ENCODE measurements at regions of chr12 and their contacts with region 1.

Region 1: GRCh38 chr12:4276524-4277204 is 3.1 kb downstream of the CCND2 start:
- DNase-seq: peak; percentile 76 to 96
- ATAC-seq: peak; percentile 27 to 50 (median 27)
- H3K4me3 ChIP-seq: no peak overlapping the region
- H3K4me3 Mint-ChIP-seq: peak overlapping the region; percentile 92
- H3K27ac ChIP-seq: no peak overlapping the region
- H3K27ac Mint-ChIP-seq: peak overlapping the region; percentile 92 to 98
- H3K4me1 ChIP-seq: peaks cover 65% of the 10 kb centered on the region
- H3K4me1 Mint-ChIP-seq: peaks cover 59 to 61% of the 10 kb centered on the region in 2 donors
- H3K27me3 ChIP-seq: no peaks in the 10 kb centered on the region
- H3K27me3 Mint-ChIP-seq: no peaks in the 10 kb centered on the region
- CTCF ChIP-seq: peak; percentile 80

Region 2: DNA sequence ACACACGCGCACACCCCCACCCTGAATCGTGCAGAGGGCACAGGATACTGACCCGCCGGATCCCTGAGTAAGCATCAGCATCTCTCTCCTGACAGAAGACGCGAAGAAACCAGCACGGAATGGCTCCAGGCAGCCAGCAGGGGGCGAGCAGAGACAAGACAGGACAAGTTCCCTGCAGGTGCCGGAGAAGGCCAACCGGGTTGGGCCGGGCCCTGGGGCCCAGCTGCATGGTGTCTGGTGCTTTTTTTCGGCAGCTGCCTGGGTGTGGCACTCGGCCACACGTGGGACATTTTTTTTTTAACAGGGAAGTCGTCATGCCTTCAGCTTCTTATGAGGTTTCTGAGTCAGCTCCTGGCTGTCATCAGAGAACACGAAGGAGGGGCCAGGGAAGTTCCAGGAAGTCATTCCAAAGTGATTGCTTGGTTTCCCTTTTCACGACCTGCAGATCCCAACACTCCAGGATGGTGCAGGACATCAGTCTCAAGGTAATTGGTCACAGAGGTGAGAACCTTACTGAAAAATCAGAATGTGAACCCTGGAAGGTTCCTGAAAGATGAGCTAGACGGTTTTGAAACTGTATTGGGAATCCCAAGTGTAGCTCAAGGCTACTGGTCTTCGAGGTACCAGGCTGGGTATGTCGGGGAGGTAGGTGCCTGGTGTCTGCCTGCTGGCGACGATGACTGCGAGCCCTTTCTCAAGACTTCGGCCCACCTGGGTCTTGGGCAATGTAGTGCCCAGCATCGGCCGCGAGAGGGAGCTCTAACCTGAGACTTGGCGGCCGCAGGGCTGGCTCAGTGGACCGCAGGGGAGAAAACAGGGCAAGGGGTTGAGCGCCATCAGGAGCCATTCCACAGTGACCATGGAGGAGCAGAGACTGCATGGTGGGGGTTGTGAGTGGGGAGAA is 976.5 kb before region 1 on chr12:
- intact Hi-C with region 1: loop called (anchors 2 kb)
- DNase-seq: peak; percentile 59 to 84
- ATAC-seq: peak; percentile 76 to 83 (median 83)
- H3K4me3 ChIP-seq: no peak overlapping the region
- H3K4me3 Mint-ChIP-seq: peak overlapping the region; percentile 81
- H3K27ac ChIP-seq: no peak overlapping the region
- H3K27ac Mint-ChIP-seq: no peak overlapping the region
- H3K4me1 ChIP-seq: peaks cover 11% of the 10 kb centered on the region
- H3K4me1 Mint-ChIP-seq: peaks cover 12 to 13% of the 10 kb centered on the region in 2 donors
- H3K27me3 ChIP-seq: no peaks in the 10 kb centered on the region
- H3K27me3 Mint-ChIP-seq: peaks cover 0 to 10% of the 10 kb centered on the region in 2 donors
- CTCF ChIP-seq: peak; percentile 90

Region 3: DNA sequence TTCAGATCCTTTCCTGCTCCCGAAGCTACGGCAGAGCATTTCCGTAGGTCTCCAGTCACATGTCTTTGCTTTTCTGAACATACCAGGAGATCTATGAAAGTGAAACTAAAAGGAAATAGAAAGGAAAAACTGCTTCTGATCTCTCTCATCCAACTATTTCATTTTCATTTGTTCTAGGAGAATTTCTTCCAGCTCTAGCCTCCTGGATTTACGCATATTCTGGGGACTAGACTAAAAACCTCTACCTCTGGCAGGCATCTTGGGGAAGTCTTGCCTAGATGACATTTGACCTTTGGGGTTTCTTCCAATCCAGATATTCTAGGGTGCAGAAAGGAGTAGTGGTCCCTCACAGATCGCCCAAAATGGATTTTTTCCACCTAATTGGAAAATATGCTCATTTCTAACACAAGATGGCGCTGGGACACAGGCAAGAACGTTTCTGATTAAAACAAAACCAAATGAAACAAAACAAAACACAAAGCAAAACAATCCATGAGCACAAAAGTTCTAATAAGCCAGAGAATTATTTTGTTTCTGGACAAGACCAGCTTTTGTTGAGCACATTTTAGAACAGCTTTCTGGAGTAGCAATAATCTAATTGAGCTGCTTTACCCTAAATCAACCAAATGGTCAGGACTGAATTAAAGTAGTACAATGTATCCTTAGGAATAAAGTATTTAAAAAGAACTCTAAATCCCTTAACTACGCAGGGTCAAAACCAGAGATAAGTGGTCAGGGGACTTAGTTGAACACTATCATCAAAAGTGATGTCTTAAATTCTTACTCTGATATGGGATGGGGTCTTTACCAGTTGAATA is 391.2 kb before region 1 on chr12:
- intact Hi-C with region 1: loop called (anchors 1 kb)
- DNase-seq: peak in 1 of 2 donors; percentile 83
- ATAC-seq: peak in 2 of 3 donors; percentile 57 to 62
- H3K4me3 ChIP-seq: no peak overlapping the region
- H3K4me3 Mint-ChIP-seq: no peak overlapping the region
- H3K27ac ChIP-seq: no peak overlapping the region
- H3K27ac Mint-ChIP-seq: no peak overlapping the region
- H3K4me1 ChIP-seq: no peaks in the 10 kb centered on the region
- H3K4me1 Mint-ChIP-seq: peaks cover 5 to 6% of the 10 kb centered on the region in 2 donors
- H3K27me3 ChIP-seq: no peaks in the 10 kb centered on the region
- H3K27me3 Mint-ChIP-seq: peaks cover 6 to 13% of the 10 kb centered on the region in 2 donors
- CTCF ChIP-seq: peak; percentile 78

Region 4: GRCh38 chr12:4107436-4107878 is 169.2 kb before region 1 on chr12:
- intact Hi-C with region 1: loop called (anchors 1 kb)
- DNase-seq: peak; percentile 52 to 93
- ATAC-seq: peak; percentile 98 to 99 (median 98)
- H3K4me3 ChIP-seq: no peak overlapping the region
- H3K4me3 Mint-ChIP-seq: no peak overlapping the region
- H3K27ac ChIP-seq: peak overlapping the region; percentile 70
- H3K27ac Mint-ChIP-seq: peak overlapping the region; percentile 92 to 93
- H3K4me1 ChIP-seq: peaks cover 19% of the 10 kb centered on the region
- H3K4me1 Mint-ChIP-seq: peaks cover 20% of the 10 kb centered on the region in 2 donors
- H3K27me3 ChIP-seq: no peaks in the 10 kb centered on the region
- H3K27me3 Mint-ChIP-seq: peaks cover 0 to 9% of the 10 kb centered on the region in 2 donors
- CTCF ChIP-seq: peak; percentile 75

Region 5: DNA sequence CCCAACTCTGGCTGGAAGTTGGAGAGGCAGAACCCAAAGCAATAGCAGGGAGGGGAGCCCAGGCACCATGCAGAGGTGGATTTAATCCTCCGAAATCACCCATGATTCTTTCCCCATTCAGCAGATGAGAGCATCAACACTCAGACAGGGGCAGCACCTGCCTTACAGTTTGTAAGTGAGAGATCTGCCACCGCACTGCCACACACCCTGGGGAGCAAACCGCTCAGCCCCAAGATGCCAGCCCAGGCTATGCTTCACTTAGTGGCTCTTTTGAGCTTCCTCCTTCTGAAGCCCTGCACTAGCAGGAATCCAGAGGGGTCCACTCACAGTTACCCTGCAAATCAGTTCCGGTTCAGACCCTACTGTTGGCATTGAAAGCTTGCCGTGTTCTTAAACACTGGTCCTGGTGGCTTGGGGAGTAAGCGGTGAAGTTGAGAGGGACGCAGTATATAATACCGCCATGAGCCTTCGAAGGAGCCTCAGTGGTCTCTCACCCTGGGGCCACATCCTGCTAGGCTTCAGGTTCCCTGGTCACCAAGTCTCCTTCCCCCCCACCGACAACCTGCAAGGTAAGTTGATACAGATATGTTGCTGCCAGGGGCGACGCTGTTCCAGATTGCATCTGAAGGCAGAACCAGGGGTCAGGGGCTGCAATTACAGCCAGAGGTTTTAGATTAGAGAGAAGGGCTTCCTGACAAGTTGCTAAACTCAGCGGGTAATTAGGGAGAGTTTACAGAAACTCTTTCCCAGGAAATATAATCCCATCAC is 75.1 kb before region 1 on chr12:
- intact Hi-C with region 1: loop called (anchors 1 kb)
- DNase-seq: peak in 1 of 2 donors; percentile 35
- ATAC-seq: peak; percentile 74 to 91 (median 85)
- H3K4me3 ChIP-seq: no peak overlapping the region
- H3K4me3 Mint-ChIP-seq: peak overlapping the region; percentile 47
- H3K27ac ChIP-seq: no peak overlapping the region
- H3K27ac Mint-ChIP-seq: peak overlapping the region; percentile 38 to 72
- H3K4me1 ChIP-seq: peaks cover 40% of the 10 kb centered on the region
- H3K4me1 Mint-ChIP-seq: peaks cover 44 to 52% of the 10 kb centered on the region in 2 donors
- H3K27me3 ChIP-seq: no peaks in the 10 kb centered on the region
- H3K27me3 Mint-ChIP-seq: peaks cover 0 to 3% of the 10 kb centered on the region in 2 donors
- CTCF ChIP-seq: no peak

Region 6: GRCh38 chr12:4356041-4356327 is 79.3 kb after region 1 on chr12:
- intact Hi-C with region 1: no loop called
- DNase-seq: peak in 1 of 2 donors; percentile 54
- ATAC-seq: peak in 2 of 3 donors; percentile 32 to 41
- H3K4me3 ChIP-seq: no peak overlapping the region
- H3K4me3 Mint-ChIP-seq: no peak overlapping the region
- H3K27ac ChIP-seq: no peak overlapping the region
- H3K27ac Mint-ChIP-seq: no peak overlapping the region
- H3K4me1 ChIP-seq: no peaks in the 10 kb centered on the region
- H3K4me1 Mint-ChIP-seq: peaks cover 0 to 14% of the 10 kb centered on the region in 2 donors
- H3K27me3 ChIP-seq: no peaks in the 10 kb centered on the region
- H3K27me3 Mint-ChIP-seq: peaks cover 0 to 1% of the 10 kb centered on the region in 2 donors
- CTCF ChIP-seq: no peak

Measured in natural killer cell (primary cell).